Activated naive CD4-positive, alpha-beta T cell treated with anti-CD3 and anti-CD28 coated beads, Interleukin-2, amount 10 ng/mL, durations not matched to agents 7 days and 5 days (primary cell): ENCODE measurements at regions of chr16 and their contacts with region 1.

Region 1: DNA sequence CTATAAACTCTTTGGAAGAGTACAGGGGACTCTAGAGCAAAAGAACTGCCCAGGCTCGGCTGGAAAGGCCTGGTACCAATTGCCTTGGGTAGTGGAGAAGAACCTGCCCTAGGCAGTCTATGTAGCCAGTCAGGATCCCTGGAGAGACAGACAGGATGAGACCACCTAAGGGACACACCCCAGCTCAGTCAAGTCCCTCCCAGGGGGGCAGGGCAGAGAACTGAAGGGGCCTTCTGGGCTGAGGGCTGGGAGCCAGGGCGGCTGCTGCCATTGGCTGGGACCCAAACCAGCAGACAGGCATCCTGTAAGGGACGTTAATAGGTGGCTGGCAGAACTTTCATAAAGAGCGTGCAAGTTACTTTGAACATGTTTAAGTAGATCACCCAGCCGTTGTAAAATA is 12.8 kb upstream of the SLC38A8 start:
- DNase-seq: peak; percentile 15
- H3K4me3 Mint-ChIP-seq: no peak overlapping the region
- H3K27ac Mint-ChIP-seq: no peak overlapping the region
- H3K4me1 Mint-ChIP-seq: no peaks in the 10 kb centered on the region
- H3K27me3 Mint-ChIP-seq: no peaks in the 10 kb centered on the region

Region 2: DNA sequence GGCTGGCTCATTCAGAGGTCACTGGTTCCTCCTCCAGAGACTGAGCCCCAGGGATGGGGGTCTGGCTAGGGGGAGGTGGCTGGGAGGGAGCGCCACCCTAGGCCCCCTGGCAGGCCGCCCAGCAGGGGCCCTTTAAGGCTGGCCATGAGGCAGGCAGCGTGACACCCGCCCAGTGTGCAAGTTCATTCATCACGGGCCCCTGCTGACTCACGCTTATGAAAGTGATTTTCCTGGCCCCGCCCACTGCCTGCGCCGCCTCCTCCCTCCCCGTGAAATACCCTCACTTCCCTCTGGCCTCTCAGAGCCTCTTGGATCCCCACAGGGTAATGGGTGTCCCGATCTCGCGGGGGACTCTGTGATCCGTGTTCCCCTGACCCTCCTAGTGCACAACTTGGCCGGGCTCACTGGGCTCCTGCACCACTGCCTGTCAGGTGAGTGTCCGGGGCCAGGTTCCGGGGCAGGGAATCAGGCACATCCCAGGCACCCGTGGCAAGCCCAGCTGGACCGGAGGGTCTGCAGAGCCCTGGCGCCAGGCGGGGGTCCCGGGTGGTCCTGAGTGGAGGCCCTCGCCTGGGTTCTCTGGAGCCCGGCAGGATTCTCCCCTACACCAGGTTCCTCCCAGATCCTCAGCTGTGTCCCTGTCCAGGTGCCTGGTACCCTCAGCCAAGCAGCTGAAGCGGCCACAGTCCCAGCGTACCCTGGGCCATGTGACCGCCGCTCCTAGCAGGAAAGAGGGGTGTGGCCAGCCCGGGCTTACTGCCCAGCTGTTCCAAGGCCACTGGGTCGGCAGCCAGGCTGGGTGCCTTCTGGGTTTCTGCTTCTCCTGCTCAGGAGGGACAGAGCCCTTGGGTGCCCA is 102.2 kb before region 1 on chr16 and contains the start of gene OSGIN1:
- CTCF ChIA-PET with region 1: interaction called, 36 read pairs
- DNase-seq: peak; percentile 85
- H3K4me3 Mint-ChIP-seq: peak within 1 kb of the TSS; percentile 67
- H3K27ac Mint-ChIP-seq: no peak within 1 kb of the TSS
- H3K4me1 Mint-ChIP-seq: peaks cover 20% of the 10 kb centered on the region
- H3K27me3 Mint-ChIP-seq: peaks cover 43% of the 10 kb centered on the region